Right lobe of liver (tissue), 6 donors: ENCODE measurements at regions of chr6 and their contacts with region 1.

Region 1: GRCh38 chr6:79869600-79870084 is 77.7 kb downstream of the ELOVL4 start:
- DNase-seq: peak; percentile 89 to 93 (median 92)
- ATAC-seq: peak; percentile 96 to 99 (median 98)
- H3K4me3 ChIP-seq: peak overlapping the region in 2 of 3 donors; percentile 6 to 37
- H3K27ac ChIP-seq: peak overlapping the region in 2 of 3 donors; percentile 64 to 66
- H3K4me1 ChIP-seq: peaks cover 0 to 23% (median 9%) of the 10 kb centered on the region in 4 donors
- H3K27me3 ChIP-seq: no peaks in the 10 kb centered on the region
- CTCF ChIP-seq: peak; percentile 92 to 96 (median 94)
- POLR2A ChIP-seq: peak; percentile 41

Region 2: GRCh38 chr6:79713701-79714322 is 155.8 kb before region 1 on chr6:
- intact Hi-C with region 1: no loop called
- DNase-seq: peak in 2 of 3 donors; percentile 32 to 56
- ATAC-seq: peak; percentile 73 to 87 (median 82)
- H3K4me3 ChIP-seq: no peak overlapping the region
- H3K27ac ChIP-seq: no peak overlapping the region
- H3K4me1 ChIP-seq: no peaks in the 10 kb centered on the region
- H3K27me3 ChIP-seq: no peaks in the 10 kb centered on the region
- CTCF ChIP-seq: peak; percentile 59 to 82 (median 77)
- POLR2A ChIP-seq: no peak

Region 3: DNA sequence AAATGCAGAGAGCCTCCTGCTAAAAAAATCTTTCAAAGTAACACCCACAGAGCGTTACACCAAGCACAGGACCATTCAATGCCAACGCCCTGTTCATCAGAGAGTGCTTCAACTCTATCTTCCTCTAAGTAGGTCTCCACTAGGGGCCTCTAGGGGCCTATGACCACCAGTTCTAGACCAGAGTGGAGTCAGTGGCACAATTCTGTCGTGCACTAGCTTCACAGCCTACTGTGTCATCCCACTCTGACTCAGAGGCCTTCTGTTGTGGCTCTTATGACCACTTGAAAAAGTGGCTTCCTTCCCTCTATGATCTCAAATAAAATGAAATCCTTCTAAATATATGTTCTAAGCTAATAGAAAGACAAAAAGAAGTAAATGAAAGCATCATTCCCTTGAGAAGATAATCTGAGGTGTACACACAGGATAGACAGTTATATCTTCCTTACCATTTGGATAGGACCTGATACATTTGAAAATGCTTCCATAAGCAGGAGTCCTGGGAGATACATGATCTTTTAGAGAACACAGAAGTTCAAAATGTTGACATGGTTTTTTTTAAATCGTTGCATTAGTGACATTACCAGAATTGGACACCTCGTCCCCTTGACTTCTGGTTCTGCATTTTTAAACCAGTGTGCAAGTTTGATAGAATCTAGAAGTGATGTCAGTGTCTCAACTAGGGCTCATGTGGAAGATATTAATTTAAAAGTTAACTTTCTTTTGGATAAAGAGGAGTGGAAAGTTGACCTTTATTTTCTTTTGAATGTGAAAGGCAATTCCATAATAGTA is 86.7 kb before region 1 on chr6:
- intact Hi-C with region 1: loop called in 1 of 2 experiments (anchors 10 kb)
- DNase-seq: no peak
- ATAC-seq: no peak
- H3K4me3 ChIP-seq: no peak overlapping the region
- H3K27ac ChIP-seq: no peak overlapping the region
- H3K4me1 ChIP-seq: peaks cover 0 to 9% (median 0%) of the 10 kb centered on the region in 4 donors
- H3K27me3 ChIP-seq: no peaks in the 10 kb centered on the region
- CTCF ChIP-seq: no peak
- POLR2A ChIP-seq: no peak

Region 4: GRCh38 chr6:79954849-79955248 is 85.2 kb after region 1 on chr6:
- intact Hi-C with region 1: no loop called
- DNase-seq: no peak
- ATAC-seq: no peak
- H3K4me3 ChIP-seq: no peak overlapping the region
- H3K27ac ChIP-seq: no peak overlapping the region
- H3K4me1 ChIP-seq: no peaks in the 10 kb centered on the region
- H3K27me3 ChIP-seq: no peaks in the 10 kb centered on the region
- CTCF ChIP-seq: no peak
- POLR2A ChIP-seq: no peak